WTC11 (cell line): ENCODE measurements at regions of chr20 and their contacts with region 1.

Region 1: DNA sequence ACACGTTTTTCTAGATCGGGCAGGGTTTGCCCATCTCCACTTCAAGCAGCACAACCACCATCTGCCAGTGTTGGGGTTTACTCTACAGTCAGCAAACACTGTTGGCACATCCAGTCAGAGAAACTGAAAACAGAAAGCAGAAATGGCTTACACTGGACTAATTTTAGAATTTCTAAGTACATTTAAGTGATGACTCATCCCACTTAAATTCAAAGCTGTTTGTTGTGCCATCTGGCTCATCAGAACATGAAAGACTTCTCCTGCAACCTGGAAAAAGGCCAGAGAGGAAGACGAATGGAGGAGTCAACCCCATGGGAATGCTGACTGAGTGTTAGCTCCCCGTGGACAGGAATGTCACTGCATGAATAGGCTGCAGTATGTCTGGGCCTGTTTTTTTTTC is 21.8 kb downstream of the FAM209B start:
- DNase-seq: no peak
- ATAC-seq: peak; percentile 73
- H3K4me3 Mint-ChIP-seq: no peak overlapping the region
- H3K27ac Mint-ChIP-seq: peak overlapping the region; percentile 9; the same call in 1 of the 2 replicates
- H3K4me1 Mint-ChIP-seq: peaks cover 8% of the 10 kb centered on the region
- H3K27me3 Mint-ChIP-seq: no peaks in the 10 kb centered on the region
- CTCF ChIP-seq: no peak

Region 2: DNA sequence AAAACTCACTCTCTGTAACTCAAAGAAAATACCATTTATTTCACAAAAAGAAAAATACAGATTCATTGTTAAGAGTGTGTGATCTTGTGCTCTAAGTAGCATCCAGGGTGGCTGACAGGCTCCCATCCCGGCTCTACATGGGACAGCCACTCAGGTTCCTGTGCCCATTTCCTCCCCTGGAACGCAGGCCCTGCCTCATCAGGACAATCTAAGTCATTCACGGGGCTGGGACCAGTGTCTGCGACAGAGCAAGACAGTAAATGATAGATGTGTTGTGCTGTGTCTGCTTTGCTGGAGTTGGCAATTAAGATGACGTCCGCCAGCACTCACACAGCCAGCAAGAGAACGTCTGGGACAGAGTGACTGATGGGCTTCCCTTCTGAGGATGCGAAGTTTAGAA is 37.2 kb before region 1 on chr20:
- CTCF ChIA-PET with region 1: no interaction called
- POLR2A ChIA-PET with region 1: no interaction called
- DNase-seq: no peak
- ATAC-seq: no peak
- H3K4me3 Mint-ChIP-seq: no peak overlapping the region
- H3K27ac Mint-ChIP-seq: no peak overlapping the region
- H3K4me1 Mint-ChIP-seq: no peaks in the 10 kb centered on the region
- H3K27me3 Mint-ChIP-seq: peaks cover 8% of the 10 kb centered on the region
- CTCF ChIP-seq: no peak

Region 3: GRCh38 chr20:56566271-56566981 is 11.6 kb after region 1 on chr20:
- CTCF ChIA-PET with region 1: interaction called, 12 read pairs
- POLR2A ChIA-PET with region 1: no interaction called
- DNase-seq: no peak
- ATAC-seq: no peak
- H3K4me3 Mint-ChIP-seq: no peak overlapping the region
- H3K27ac Mint-ChIP-seq: no peak overlapping the region
- H3K4me1 Mint-ChIP-seq: peaks cover 8% of the 10 kb centered on the region
- H3K27me3 Mint-ChIP-seq: no peaks in the 10 kb centered on the region; the same call in 1 of the 2 replicates
- CTCF ChIP-seq: no peak

Region 4: GRCh38 chr20:56579287-56579710 is 24.4 kb after region 1 on chr20:
- CTCF ChIA-PET with region 1: interaction called, 45 read pairs
- POLR2A ChIA-PET with region 1: no interaction called
- DNase-seq: no peak
- ATAC-seq: no peak
- H3K4me3 Mint-ChIP-seq: no peak overlapping the region
- H3K27ac Mint-ChIP-seq: no peak overlapping the region
- H3K4me1 Mint-ChIP-seq: peaks cover 5% of the 10 kb centered on the region; the same call in 1 of the 2 replicates
- H3K27me3 Mint-ChIP-seq: peaks cover 3% of the 10 kb centered on the region; the same call in 1 of the 2 replicates
- CTCF ChIP-seq: no peak

Region 5: GRCh38 chr20:56778765-56779195 is 223.9 kb after region 1 on chr20:
- CTCF ChIA-PET with region 1: no interaction called
- POLR2A ChIA-PET with region 1: no interaction called
- DNase-seq: no peak
- ATAC-seq: peak; percentile 18; the same call in 1 of the 2 replicates
- H3K4me3 Mint-ChIP-seq: no peak overlapping the region
- H3K27ac Mint-ChIP-seq: peak overlapping the region; percentile 64
- H3K4me1 Mint-ChIP-seq: peaks cover 50% of the 10 kb centered on the region
- H3K27me3 Mint-ChIP-seq: peaks cover 5% of the 10 kb centered on the region
- CTCF ChIP-seq: no peak

Region 6: GRCh38 chr20:56893226-56893912 is 338.5 kb after region 1 on chr20:
- CTCF ChIA-PET with region 1: no interaction called
- POLR2A ChIA-PET with region 1: no interaction called
- DNase-seq: peak; percentile 54
- ATAC-seq: peak; percentile 91
- H3K4me3 Mint-ChIP-seq: no peak overlapping the region
- H3K27ac Mint-ChIP-seq: peak overlapping the region; percentile 21; the same call in 1 of the 2 replicates
- H3K4me1 Mint-ChIP-seq: peaks cover 48% of the 10 kb centered on the region
- H3K27me3 Mint-ChIP-seq: no peaks in the 10 kb centered on the region
- CTCF ChIP-seq: no peak